WTC11 (cell line): ENCODE measurements at regions of chr2 and their contacts with region 1.

Region 1: GRCh38 chr2:216023055-216023648 is 9.8 kb upstream of the MREG start:
- DNase-seq: peak; percentile 53
- ATAC-seq: peak; percentile 98
- H3K4me3 Mint-ChIP-seq: no peak overlapping the region
- H3K27ac Mint-ChIP-seq: no peak overlapping the region
- H3K4me1 Mint-ChIP-seq: no peaks in the 10 kb centered on the region
- H3K27me3 Mint-ChIP-seq: no peaks in the 10 kb centered on the region
- CTCF ChIP-seq: peak; percentile 46

Region 2: GRCh38 chr2:215949991-215950404 is 73.2 kb before region 1 on chr2:
- CTCF ChIA-PET with region 1: interaction called, 23 read pairs
- POLR2A ChIA-PET with region 1: no interaction called
- DNase-seq: no peak
- ATAC-seq: peak; percentile 81
- H3K4me3 Mint-ChIP-seq: no peak overlapping the region
- H3K27ac Mint-ChIP-seq: no peak overlapping the region
- H3K4me1 Mint-ChIP-seq: peaks cover 7% of the 10 kb centered on the region
- H3K27me3 Mint-ChIP-seq: no peaks in the 10 kb centered on the region
- CTCF ChIP-seq: no peak

Region 3: DNA sequence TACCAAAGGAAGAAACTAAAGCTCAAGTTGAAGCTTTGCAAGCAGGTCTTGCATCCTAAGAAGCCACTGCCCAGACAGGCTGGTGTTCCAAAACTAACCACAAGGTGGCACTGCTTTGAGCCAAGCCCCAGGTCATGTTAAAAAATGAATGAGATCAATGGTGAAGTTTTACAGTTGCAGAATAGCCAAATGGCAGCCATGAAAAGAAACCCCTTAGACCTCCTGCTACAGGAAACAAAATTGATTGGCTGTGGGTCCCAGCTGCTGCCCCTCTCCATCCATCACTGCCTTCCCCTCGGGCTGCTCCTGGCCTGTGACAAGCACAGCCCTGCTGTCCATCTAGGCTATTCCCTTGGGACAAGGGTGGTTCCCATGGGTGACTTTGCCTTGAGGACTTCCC is 10.9 kb after region 1 on chr2:
- CTCF ChIA-PET with region 1: interaction called, 17 read pairs
- POLR2A ChIA-PET with region 1: no interaction called
- DNase-seq: peak; percentile 85
- ATAC-seq: peak; percentile 78
- H3K4me3 Mint-ChIP-seq: no peak overlapping the region
- H3K27ac Mint-ChIP-seq: no peak overlapping the region
- H3K4me1 Mint-ChIP-seq: no peaks in the 10 kb centered on the region
- H3K27me3 Mint-ChIP-seq: no peaks in the 10 kb centered on the region
- CTCF ChIP-seq: peak; percentile 94